CD14-positive monocyte (primary cell): ENCODE measurements at regions of chr6 and their contacts with region 1.

Region 1: GRCh38 chr6:106085984-106086813 is at the start of gene PRDM1:
- DNase-seq: peak; percentile 91 to 97 (median 92)
- H3K4me3 ChIP-seq: peak within 1 kb of the TSS; percentile 36 to 81 (median 46)
- H3K4me3 Mint-ChIP-seq: peak within 1 kb of the TSS; percentile 87 to 93
- H3K27ac ChIP-seq: peak within 1 kb of the TSS; percentile 53 to 81
- H3K27ac Mint-ChIP-seq: peak within 1 kb of the TSS; percentile 86 to 97 (median 92)
- H3K4me1 ChIP-seq: peaks cover 59 to 67% of the 10 kb centered on the region in 2 donors
- H3K4me1 Mint-ChIP-seq: peaks cover 68% of the 10 kb centered on the region
- H3K27me3 ChIP-seq: no peaks in the 10 kb centered on the region
- H3K27me3 Mint-ChIP-seq: peaks cover 0 to 3% (median 2%) of the 10 kb centered on the region in 3 donors
- CTCF ChIP-seq: no peak
- polyA plus RNA-seq, gene PRDM1: 1.8 to 14.9 (median 5.2) TPM

Region 2: DNA sequence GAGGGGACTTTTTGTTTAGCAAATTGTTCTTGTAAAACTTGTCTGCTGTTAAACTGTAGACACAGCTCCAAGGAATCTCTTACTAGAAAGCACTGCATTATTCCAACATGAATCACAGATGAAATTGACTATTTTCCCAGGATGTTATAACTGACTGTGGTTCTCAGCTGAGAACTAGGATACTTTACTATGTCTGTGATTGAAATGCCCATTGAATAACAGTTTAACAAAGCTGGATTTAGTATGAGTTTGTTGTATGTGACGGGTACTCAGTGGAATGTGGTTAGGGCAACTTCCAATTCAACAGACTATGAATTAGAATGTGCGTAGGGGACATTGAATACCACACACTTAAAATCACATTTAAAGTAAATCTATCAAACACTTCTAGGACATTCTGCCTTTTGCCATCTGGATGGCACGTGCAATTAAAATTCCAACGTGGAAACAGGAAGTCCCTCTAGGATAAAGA is 489.9 kb before region 1 on chr6:
- intact Hi-C with region 1: loop called in 1 of 2 experiments (anchors 5 kb)
- DNase-seq: no peak
- H3K4me3 ChIP-seq: no peak overlapping the region
- H3K4me3 Mint-ChIP-seq: no peak overlapping the region
- H3K27ac ChIP-seq: no peak overlapping the region
- H3K27ac Mint-ChIP-seq: no peak overlapping the region
- H3K4me1 ChIP-seq: peaks cover 45 to 60% of the 10 kb centered on the region in 2 donors
- H3K4me1 Mint-ChIP-seq: peaks cover 50% of the 10 kb centered on the region
- H3K27me3 ChIP-seq: no peaks in the 10 kb centered on the region
- H3K27me3 Mint-ChIP-seq: no peaks in the 10 kb centered on the region
- CTCF ChIP-seq: no peak

Region 3: GRCh38 chr6:105786890-105787655 is 299.1 kb before region 1 on chr6:
- intact Hi-C with region 1: loop called (anchors 5 to 10 kb)
- DNase-seq: no peak
- H3K4me3 ChIP-seq: no peak overlapping the region
- H3K4me3 Mint-ChIP-seq: no peak overlapping the region
- H3K27ac ChIP-seq: no peak overlapping the region
- H3K27ac Mint-ChIP-seq: peak overlapping the region in 3 of 7 donors; percentile 59 to 79 (median 62)
- H3K4me1 ChIP-seq: peaks cover 54 to 59% of the 10 kb centered on the region in 2 donors
- H3K4me1 Mint-ChIP-seq: peaks cover 57% of the 10 kb centered on the region
- H3K27me3 ChIP-seq: no peaks in the 10 kb centered on the region
- H3K27me3 Mint-ChIP-seq: peaks cover 0 to 8% (median 2%) of the 10 kb centered on the region in 3 donors
- CTCF ChIP-seq: no peak

Region 4: DNA sequence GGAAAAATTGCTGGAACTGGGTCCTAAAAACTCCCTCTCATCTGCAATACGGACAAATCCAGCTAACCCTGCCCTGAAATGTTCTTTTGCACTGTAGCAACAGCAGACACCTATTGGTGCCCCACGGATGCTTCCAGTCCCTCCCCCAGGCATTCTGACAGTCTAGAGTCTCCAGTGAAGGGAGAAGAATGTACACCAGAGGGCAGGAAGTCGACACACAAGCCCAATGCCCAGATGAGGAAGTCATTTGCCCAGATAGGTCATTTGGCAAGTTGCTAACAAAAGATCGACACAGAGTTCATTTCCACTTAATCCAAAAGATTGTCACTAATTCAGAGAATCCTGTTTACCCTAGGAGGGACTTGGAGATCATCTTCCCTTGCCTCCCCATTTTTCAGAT is 293.1 kb before region 1 on chr6:
- intact Hi-C with region 1: loop called (anchors 5 to 10 kb)
- DNase-seq: peak; percentile 79 to 85 (median 80)
- H3K4me3 ChIP-seq: peak overlapping the region in 1 of 3 experiments; percentile 35
- H3K4me3 Mint-ChIP-seq: peak overlapping the region in 1 of 2 donors; percentile 70
- H3K27ac ChIP-seq: peak overlapping the region in 1 of 2 donors; percentile 66
- H3K27ac Mint-ChIP-seq: peak overlapping the region; percentile 34 to 89 (median 82)
- H3K4me1 ChIP-seq: peaks cover 43 to 49% of the 10 kb centered on the region in 2 donors
- H3K4me1 Mint-ChIP-seq: peaks cover 57% of the 10 kb centered on the region
- H3K27me3 ChIP-seq: no peaks in the 10 kb centered on the region
- H3K27me3 Mint-ChIP-seq: no peaks in the 10 kb centered on the region
- CTCF ChIP-seq: peak; percentile 72

Region 5: DNA sequence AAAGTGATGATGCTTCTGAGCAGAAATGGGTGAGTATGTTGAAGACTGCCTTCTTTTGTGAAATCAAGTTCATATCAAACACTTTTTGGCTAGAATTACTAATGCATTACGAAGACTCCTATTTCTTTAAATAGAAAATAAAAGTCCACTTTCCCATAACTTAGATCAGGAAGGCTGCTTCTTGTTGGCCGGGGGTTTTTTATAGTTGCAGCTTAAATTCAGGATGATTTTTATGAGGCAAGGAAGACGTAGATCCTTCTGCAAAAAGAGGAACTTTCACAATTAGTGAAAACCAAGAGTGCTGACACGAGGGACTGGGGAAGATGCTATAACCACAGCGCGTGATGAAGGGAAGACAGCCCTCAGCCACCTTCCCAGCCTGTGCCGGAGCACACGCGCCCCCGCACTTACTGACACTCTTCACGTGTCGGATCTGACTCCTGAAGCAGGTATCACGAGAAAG is 206.1 kb before region 1 on chr6:
- intact Hi-C with region 1: loop called (anchors 5 to 10 kb)
- DNase-seq: peak; percentile 95 to 98 (median 96)
- H3K4me3 ChIP-seq: peak overlapping the region in 1 of 3 experiments; percentile 34
- H3K4me3 Mint-ChIP-seq: peak overlapping the region; percentile 54 to 75
- H3K27ac ChIP-seq: peak overlapping the region; percentile 75 to 95
- H3K27ac Mint-ChIP-seq: peak overlapping the region; percentile 90 to 99 (median 97)
- H3K4me1 ChIP-seq: peaks cover 49 to 59% of the 10 kb centered on the region in 2 donors
- H3K4me1 Mint-ChIP-seq: peaks cover 68% of the 10 kb centered on the region
- H3K27me3 ChIP-seq: no peaks in the 10 kb centered on the region
- H3K27me3 Mint-ChIP-seq: peaks cover 0 to 9% (median 0%) of the 10 kb centered on the region in 3 donors
- CTCF ChIP-seq: no peak

Region 6: GRCh38 chr6:105992315-105992961 is 93.8 kb before region 1 on chr6:
- intact Hi-C with region 1: loop called (anchors 5 to 10 kb)
- DNase-seq: peak; percentile 76 to 88 (median 85)
- H3K4me3 ChIP-seq: peak overlapping the region; percentile 81 to 94 (median 93)
- H3K4me3 Mint-ChIP-seq: peak overlapping the region; percentile 93 to 99
- H3K27ac ChIP-seq: peak overlapping the region in 1 of 2 donors; percentile 79
- H3K27ac Mint-ChIP-seq: peak overlapping the region; percentile 36 to 93 (median 86)
- H3K4me1 ChIP-seq: peaks cover 30 to 40% of the 10 kb centered on the region in 2 donors
- H3K4me1 Mint-ChIP-seq: peaks cover 31% of the 10 kb centered on the region
- H3K27me3 ChIP-seq: peaks cover 56 to 79% of the 10 kb centered on the region in 2 donors
- H3K27me3 Mint-ChIP-seq: peaks cover 70 to 75% (median 72%) of the 10 kb centered on the region in 3 donors
- CTCF ChIP-seq: no peak

Region 7: GRCh38 chr6:106223300-106223930 is 137.2 kb after region 1 on chr6:
- intact Hi-C with region 1: loop called in 1 of 2 experiments (anchors 10 kb)
- DNase-seq: peak; percentile 58 to 85 (median 73)
- H3K4me3 ChIP-seq: no peak overlapping the region
- H3K4me3 Mint-ChIP-seq: no peak overlapping the region
- H3K27ac ChIP-seq: no peak overlapping the region
- H3K27ac Mint-ChIP-seq: no peak overlapping the region
- H3K4me1 ChIP-seq: peaks cover 5 to 6% of the 10 kb centered on the region in 2 donors
- H3K4me1 Mint-ChIP-seq: peaks cover 9% of the 10 kb centered on the region
- H3K27me3 ChIP-seq: no peaks in the 10 kb centered on the region
- H3K27me3 Mint-ChIP-seq: no peaks in the 10 kb centered on the region
- CTCF ChIP-seq: peak; percentile 84

Region 8: DNA sequence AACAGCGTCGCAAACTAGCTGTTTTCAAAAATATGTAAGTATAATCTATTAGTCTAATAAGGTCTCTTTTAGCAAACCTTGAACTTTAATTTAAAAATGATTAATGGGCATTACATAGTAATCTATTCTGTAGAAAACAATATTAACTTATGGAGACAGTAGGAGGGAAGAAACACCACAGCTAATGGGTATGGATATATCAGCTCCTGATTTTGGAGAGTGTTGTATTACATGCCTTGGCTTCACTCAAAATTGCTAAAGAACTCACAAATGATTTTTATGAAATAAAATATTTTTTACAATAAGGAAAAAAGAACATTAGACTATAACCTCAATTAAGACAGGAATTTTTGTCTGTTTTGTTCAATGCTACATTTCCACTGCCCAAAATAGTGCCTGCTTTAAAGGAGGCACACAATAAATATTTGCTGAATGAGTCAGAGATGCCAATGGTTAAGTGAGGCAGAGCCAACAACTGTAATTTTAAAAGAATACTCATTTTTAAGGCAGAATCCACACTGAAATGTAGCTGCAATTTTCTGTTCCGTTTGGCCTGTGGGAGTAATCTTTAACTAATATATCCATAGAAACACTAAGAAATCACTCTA is 223.7 kb after region 1 on chr6:
- intact Hi-C with region 1: no loop called
- DNase-seq: no peak
- H3K4me3 ChIP-seq: no peak overlapping the region
- H3K4me3 Mint-ChIP-seq: no peak overlapping the region
- H3K27ac ChIP-seq: no peak overlapping the region
- H3K27ac Mint-ChIP-seq: no peak overlapping the region
- H3K4me1 ChIP-seq: no peaks in the 10 kb centered on the region
- H3K4me1 Mint-ChIP-seq: peaks cover 6% of the 10 kb centered on the region
- H3K27me3 ChIP-seq: no peaks in the 10 kb centered on the region
- H3K27me3 Mint-ChIP-seq: no peaks in the 10 kb centered on the region
- CTCF ChIP-seq: no peak